T-cell (primary cell): ENCODE measurements at regions of chr1 and their contacts with region 1.

Region 1: GRCh38 chr1:39293375-39294070 is 89.0 kb downstream of the MACF1 start:
- DNase-seq: no peak
- ATAC-seq: no peak
- H3K4me3 ChIP-seq: no peak overlapping the region
- H3K4me3 Mint-ChIP-seq: no peak overlapping the region
- H3K27ac ChIP-seq: no peak overlapping the region
- H3K27ac Mint-ChIP-seq: peak overlapping the region; percentile 15 to 48
- H3K4me1 ChIP-seq: no peaks in the 10 kb centered on the region
- H3K4me1 Mint-ChIP-seq: no peaks in the 10 kb centered on the region
- H3K27me3 ChIP-seq: no peaks in the 10 kb centered on the region
- H3K27me3 Mint-ChIP-seq: no peaks in the 10 kb centered on the region

Region 2: DNA sequence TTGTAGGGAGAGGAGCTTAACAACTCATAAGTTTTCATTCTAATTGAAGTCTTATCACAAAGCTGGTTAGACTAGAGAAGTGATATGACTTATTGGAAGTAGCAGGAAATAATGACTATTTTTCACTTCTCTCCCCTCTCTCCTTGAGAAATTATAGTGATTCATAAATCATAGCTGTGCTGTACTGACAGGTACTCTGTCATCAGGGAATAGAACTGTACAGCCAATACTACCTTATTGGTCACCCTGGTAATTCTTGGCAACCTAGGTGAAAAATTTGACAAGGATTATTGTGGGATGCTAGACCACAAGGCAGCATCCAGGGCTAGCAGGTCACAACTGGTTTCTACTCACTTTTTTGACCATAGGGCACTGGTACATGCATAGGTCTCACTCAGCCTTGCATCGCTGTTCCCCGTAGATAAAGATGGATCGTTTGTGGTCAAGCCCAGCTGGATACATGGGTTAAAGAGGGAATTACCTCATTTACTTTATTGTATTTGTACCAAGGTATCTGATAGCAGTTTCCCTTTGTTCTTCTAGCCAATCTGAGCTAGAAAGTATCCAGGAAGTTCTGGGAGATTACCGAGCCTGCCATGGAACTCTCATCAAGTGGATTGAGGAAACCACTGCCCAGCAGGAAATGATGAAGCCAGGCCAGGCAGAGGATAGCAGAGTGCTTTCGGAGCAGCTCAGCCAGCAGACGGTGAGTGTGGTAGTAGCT is 24.5 kb after region 1 on chr1:
- CTCF ChIA-PET with region 1: no interaction called
- POLR2A ChIA-PET with region 1: no interaction called
- DNase-seq: no peak
- ATAC-seq: no peak
- H3K4me3 ChIP-seq: no peak overlapping the region
- H3K4me3 Mint-ChIP-seq: no peak overlapping the region
- H3K27ac ChIP-seq: no peak overlapping the region
- H3K27ac Mint-ChIP-seq: peak overlapping the region; percentile 11 to 48
- H3K4me1 ChIP-seq: no peaks in the 10 kb centered on the region
- H3K4me1 Mint-ChIP-seq: no peaks in the 10 kb centered on the region
- H3K27me3 ChIP-seq: no peaks in the 10 kb centered on the region
- H3K27me3 Mint-ChIP-seq: no peaks in the 10 kb centered on the region

Region 3: GRCh38 chr1:39491146-39491921 is 197.8 kb after region 1 on chr1 and contains the start of gene BMP8A:
- CTCF ChIA-PET with region 1: no interaction called
- POLR2A ChIA-PET with region 1: interaction called in 1 of 2 experiments, 13 read pairs
- DNase-seq: peak; percentile 31 to 83 (median 62)
- ATAC-seq: peak; percentile 92 to 94 (median 92)
- H3K4me3 ChIP-seq: peak within 1 kb of the TSS; percentile 31 to 57
- H3K4me3 Mint-ChIP-seq: peak within 1 kb of the TSS; percentile 65 to 79 (median 74)
- H3K27ac ChIP-seq: no peak within 1 kb of the TSS
- H3K27ac Mint-ChIP-seq: no peak within 1 kb of the TSS
- H3K4me1 ChIP-seq: peaks cover 0 to 14% of the 10 kb centered on the region in 2 experiments
- H3K4me1 Mint-ChIP-seq: peaks cover 4 to 10% (median 6%) of the 10 kb centered on the region in 3 donors
- H3K27me3 ChIP-seq: peaks cover 3 to 36% of the 10 kb centered on the region in 2 experiments
- H3K27me3 Mint-ChIP-seq: peaks cover 16 to 21% of the 10 kb centered on the region in 2 donors
- total RNA-seq, gene BMP8A: 0.38 TPM in 1 of 5 donors, not detected in the others

Region 4: GRCh38 chr1:39509360-39510009 is 216.0 kb after region 1 on chr1:
- CTCF ChIA-PET with region 1: no interaction called
- POLR2A ChIA-PET with region 1: no interaction called
- DNase-seq: no peak
- ATAC-seq: peak in 2 of 4 experiments; percentile 29 to 47
- H3K4me3 ChIP-seq: no peak overlapping the region
- H3K4me3 Mint-ChIP-seq: peak overlapping the region; percentile 10 to 46 (median 23)
- H3K27ac ChIP-seq: no peak overlapping the region
- H3K27ac Mint-ChIP-seq: peak overlapping the region; percentile 56 to 62
- H3K4me1 ChIP-seq: peaks cover 0 to 20% of the 10 kb centered on the region in 2 experiments
- H3K4me1 Mint-ChIP-seq: peaks cover 5 to 20% (median 15%) of the 10 kb centered on the region in 3 donors
- H3K27me3 ChIP-seq: peaks cover 0 to 13% of the 10 kb centered on the region in 2 experiments
- H3K27me3 Mint-ChIP-seq: peaks cover 0 to 4% of the 10 kb centered on the region in 2 donors

Region 5: GRCh38 chr1:40783001-40783905 is 1489.7 kb after region 1 on chr1 and contains the start of gene KCNQ4:
- CTCF ChIA-PET with region 1: no interaction called
- POLR2A ChIA-PET with region 1: no interaction called
- DNase-seq: peak in 3 of 35 experiments; percentile 13 to 22 (median 19)
- ATAC-seq: peak; percentile 44 to 64 (median 52)
- H3K4me3 ChIP-seq: peak within 1 kb of the TSS in 1 of 2 donors; percentile 57
- H3K4me3 Mint-ChIP-seq: peak within 1 kb of the TSS; percentile 62 to 84 (median 71)
- H3K27ac ChIP-seq: no peak within 1 kb of the TSS
- H3K27ac Mint-ChIP-seq: peak within 1 kb of the TSS in 1 of 2 donors; percentile 43
- H3K4me1 ChIP-seq: peaks cover 0 to 15% of the 10 kb centered on the region in 2 experiments
- H3K4me1 Mint-ChIP-seq: peaks cover 6 to 14% (median 8%) of the 10 kb centered on the region in 3 donors
- H3K27me3 ChIP-seq: peaks cover 2 to 52% of the 10 kb centered on the region in 2 experiments
- H3K27me3 Mint-ChIP-seq: peaks cover 16 to 44% of the 10 kb centered on the region in 2 donors
- total RNA-seq, gene KCNQ4: 0.10 to 0.35 (median 0.26) TPM

Region 6: GRCh38 chr1:40945491-40945973 is 1652.0 kb after region 1 on chr1:
- CTCF ChIA-PET with region 1: no interaction called
- POLR2A ChIA-PET with region 1: interaction called in 1 of 2 experiments, 14 read pairs
- DNase-seq: no peak
- ATAC-seq: no peak
- H3K4me3 ChIP-seq: no peak overlapping the region
- H3K4me3 Mint-ChIP-seq: no peak overlapping the region
- H3K27ac ChIP-seq: no peak overlapping the region
- H3K27ac Mint-ChIP-seq: no peak overlapping the region
- H3K4me1 ChIP-seq: no peaks in the 10 kb centered on the region
- H3K4me1 Mint-ChIP-seq: peaks cover 3 to 6% (median 4%) of the 10 kb centered on the region in 3 donors
- H3K27me3 ChIP-seq: peaks cover 0 to 7% of the 10 kb centered on the region in 2 experiments
- H3K27me3 Mint-ChIP-seq: peaks cover 16 to 20% of the 10 kb centered on the region in 2 donors